Gastrocnemius medialis (tissue), 4 donors: ENCODE measurements at regions of chr11 and their contacts with region 1.

Region 1: GRCh38 chr11:59545179-59546020 is 34.1 kb downstream of the OR4D9 start:
- DNase-seq: no peak
- ATAC-seq: no peak
- H3K4me3 ChIP-seq: no peak overlapping the region
- H3K27ac ChIP-seq: no peak overlapping the region
- H3K4me1 ChIP-seq: peaks cover 3 to 4% of the 10 kb centered on the region in 2 donors
- H3K27me3 ChIP-seq: no peaks in the 10 kb centered on the region
- CTCF ChIP-seq: no peak
- POLR2A ChIP-seq: no peak

Region 2: GRCh38 chr11:59598961-59599360 is 53.6 kb after region 1 on chr11:
- in situ Hi-C with region 1: no loop called
- intact Hi-C with region 1: no loop called
- DNase-seq: no peak
- ATAC-seq: no peak
- H3K4me3 ChIP-seq: no peak overlapping the region
- H3K27ac ChIP-seq: no peak overlapping the region
- H3K4me1 ChIP-seq: peaks cover 0 to 2% of the 10 kb centered on the region in 2 donors
- H3K27me3 ChIP-seq: no peaks in the 10 kb centered on the region
- CTCF ChIP-seq: no peak
- POLR2A ChIP-seq: no peak

Region 3: DNA sequence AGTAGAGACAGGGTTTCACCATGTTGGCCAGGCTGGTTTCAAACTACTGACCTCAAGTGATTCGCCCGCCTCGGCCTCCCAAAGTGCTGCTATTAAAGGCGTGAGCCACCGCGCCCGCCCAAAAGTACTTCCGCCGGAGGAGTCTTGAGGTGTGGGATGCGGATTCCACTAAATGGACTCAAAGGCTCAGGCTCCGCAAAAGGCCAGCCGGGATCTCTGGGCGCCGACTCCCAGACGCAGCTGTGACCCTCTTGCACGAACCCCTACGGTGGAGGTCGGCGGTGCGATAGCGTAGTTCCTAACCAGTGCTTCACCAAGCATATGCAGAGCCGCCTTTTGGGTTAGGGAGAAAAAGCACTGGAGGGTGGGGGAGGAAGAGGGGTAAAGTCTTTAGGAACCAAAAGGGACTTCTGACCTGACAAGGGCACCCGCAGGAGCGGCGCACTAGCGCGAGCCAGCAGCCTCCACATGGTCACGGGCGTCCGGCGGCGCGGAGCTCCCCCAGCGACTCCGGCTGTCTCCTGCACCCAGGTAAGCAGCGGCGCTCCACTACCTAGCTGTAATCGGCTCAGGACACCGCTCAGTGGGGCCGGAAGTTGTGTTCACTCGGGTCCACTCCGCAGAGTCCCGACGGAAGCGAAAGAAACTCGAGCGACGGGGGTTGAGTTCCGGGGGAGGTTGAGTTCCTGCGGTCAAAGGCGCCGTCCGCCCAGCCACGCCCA is 264.9 kb after region 1 on chr11 and contains the start of gene MRPL16:
- in situ Hi-C with region 1: loop called in 1 of 4 experiments (anchors 25 kb)
- intact Hi-C with region 1: loop called (anchors 5 kb)
- DNase-seq: peak; percentile 73 to 82
- ATAC-seq: peak; percentile 98 to 99
- H3K4me3 ChIP-seq: peak within 1 kb of the TSS; percentile 76 to 98 (median 93)
- H3K27ac ChIP-seq: peak within 1 kb of the TSS; percentile 83 to 90 (median 87)
- H3K4me1 ChIP-seq: peaks cover 8 to 11% of the 10 kb centered on the region in 2 donors
- H3K27me3 ChIP-seq: no peaks in the 10 kb centered on the region
- CTCF ChIP-seq: peak; percentile 14 to 51 (median 17)
- POLR2A ChIP-seq: peak in 1 of 2 donors; percentile 16
- total RNA-seq, gene MRPL16: 33.7 to 78.2 (median 38.3) TPM

Region 4: DNA sequence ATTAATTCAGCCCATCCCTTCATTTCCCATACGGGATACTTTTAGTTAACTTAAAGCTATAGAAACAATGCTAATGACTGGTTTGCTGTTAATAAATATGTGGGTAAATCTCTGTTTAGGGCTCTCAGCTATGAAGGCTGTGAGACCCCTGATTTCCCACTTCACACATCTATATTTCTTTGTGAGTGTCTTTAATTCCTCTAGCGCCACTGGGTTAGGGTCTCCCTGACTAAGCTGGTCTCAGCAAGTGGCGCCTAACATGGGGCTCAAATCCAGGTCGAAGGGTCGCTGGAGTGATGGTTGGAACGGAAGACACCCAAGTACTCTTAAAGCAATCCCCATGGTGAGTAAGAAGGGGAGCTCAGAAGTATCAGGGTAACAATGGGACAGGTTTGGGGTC is 378.4 kb after region 1 on chr11:
- in situ Hi-C with region 1: no loop called
- intact Hi-C with region 1: no loop called
- DNase-seq: no peak
- ATAC-seq: no peak
- H3K4me3 ChIP-seq: no peak overlapping the region
- H3K27ac ChIP-seq: no peak overlapping the region
- H3K4me1 ChIP-seq: no peaks in the 10 kb centered on the region
- H3K27me3 ChIP-seq: no peaks in the 10 kb centered on the region
- CTCF ChIP-seq: no peak
- POLR2A ChIP-seq: no peak